ENCODE measurements at regions of chr12 and their contacts with region 1.

Region 1: DNA sequence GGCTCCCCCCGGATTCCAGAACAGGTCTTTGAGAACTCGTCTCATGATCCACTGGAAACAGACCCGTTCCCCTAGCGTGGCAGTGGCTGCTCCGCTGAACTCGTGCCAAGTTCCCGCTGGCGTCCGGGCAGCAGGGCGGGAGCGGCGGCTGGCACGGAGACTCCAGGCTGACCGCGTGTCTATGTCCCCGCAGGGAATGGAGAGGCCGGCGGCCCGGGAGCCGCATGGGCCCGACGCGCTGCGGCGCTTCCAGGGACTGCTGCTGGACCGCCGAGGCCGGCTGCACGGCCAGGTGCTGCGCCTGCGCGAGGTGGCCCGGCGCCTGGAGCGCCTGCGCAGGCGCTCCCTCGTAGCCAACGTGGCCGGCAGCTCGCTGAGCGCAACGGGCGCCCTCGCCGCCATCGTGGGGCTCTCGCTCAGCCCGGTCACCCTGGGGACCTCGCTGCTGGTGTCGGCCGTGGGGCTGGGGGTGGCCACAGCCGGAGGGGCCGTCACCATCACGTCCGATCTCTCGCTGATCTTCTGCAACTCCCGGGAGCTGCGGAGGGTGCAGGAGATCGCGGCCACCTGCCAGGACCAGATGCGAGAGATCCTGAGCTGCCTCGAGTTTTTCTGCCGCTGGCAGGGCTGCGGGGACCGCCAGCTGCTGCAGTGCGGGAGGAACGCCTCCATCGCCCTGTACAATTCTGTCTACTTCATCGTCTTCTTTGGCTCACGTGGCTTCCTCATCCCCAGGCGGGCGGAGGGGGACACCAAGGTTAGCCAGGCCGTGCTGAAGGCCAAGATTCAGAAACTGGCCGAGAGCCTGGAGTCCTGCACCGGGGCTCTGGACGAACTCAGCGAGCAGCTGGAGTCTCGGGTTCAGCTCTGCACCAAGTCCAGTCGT is 1.5 kb downstream of the APOLD1 start:
- DNase-seq: peak; percentile 88
- H3K4me3 ChIP-seq: peak overlapping the region; percentile 6 to 44 (median 39)
- H3K27ac ChIP-seq: peak overlapping the region; percentile 78
- H3K4me1 ChIP-seq: peaks cover 43% of the 10 kb centered on the region
- H3K27me3 ChIP-seq: no peaks in the 10 kb centered on the region
- CTCF ChIP-seq: peak in 1 of 2 donors; percentile 8
- POLR2A ChIP-seq: peak; percentile 91

Region 2: DNA sequence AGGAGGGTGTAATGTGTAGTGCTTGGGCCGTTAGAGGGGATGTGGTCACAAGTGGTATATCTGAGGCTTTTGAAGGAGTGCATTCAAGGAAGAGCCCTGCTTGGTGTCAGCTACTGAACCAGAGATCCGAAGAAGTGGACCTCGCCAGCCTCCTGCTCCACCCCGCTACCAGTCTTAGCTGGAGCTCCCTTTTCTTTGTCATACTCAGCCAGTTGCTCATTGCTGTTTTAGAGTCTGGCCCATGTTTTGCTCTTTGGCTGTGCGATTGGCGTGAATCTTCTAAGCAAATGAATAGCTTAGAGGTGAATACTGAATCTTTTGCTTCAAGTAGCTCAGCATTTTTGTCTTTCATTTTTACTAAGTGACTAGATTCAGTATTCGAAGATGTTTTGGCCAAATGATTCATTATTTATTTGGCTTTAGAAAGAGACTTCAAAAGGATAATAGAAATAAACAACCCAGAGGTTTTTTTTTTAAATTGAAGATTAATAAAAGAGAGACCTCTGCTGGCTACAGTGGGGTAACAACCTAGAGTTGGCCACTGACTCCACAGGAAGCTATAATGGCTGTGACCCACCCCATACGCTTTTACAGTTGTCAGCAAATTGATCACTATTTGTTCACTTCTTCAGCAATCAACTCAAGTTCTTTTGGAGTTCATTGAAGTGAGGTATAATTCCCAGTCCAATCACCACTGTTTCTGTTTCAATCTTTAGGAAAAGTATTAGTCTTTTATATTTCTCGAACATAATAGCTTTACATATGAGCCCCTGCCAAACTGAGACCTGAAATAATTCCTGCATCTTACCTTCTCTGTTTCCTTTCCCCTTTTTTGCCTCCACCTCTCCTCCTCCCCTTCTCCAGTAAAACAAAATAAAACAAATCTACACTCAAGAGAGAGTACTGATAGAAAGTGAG is 49.9 kb before region 1 on chr12:
- CTCF ChIA-PET with region 1: interaction called, 15 read pairs
- POLR2A ChIA-PET with region 1: interaction called, 4 read pairs
- dilution Hi-C with region 1: no loop called
- intact Hi-C with region 1: no loop called
- DNase-seq: peak; percentile 67
- H3K4me3 ChIP-seq: no peak overlapping the region
- H3K27ac ChIP-seq: peak overlapping the region; percentile 39
- H3K4me1 ChIP-seq: peaks cover 13% of the 10 kb centered on the region
- H3K27me3 ChIP-seq: no peaks in the 10 kb centered on the region
- CTCF ChIP-seq: peak; percentile 44 to 49
- POLR2A ChIP-seq: no peak

Region 3: GRCh38 chr12:12813120-12814101 is 26.5 kb after region 1 on chr12 and contains the start of gene DDX47:
- CTCF ChIA-PET with region 1: interaction called, 9 read pairs
- POLR2A ChIA-PET with region 1: interaction called, 3 read pairs
- dilution Hi-C with region 1: no loop called
- intact Hi-C with region 1: loop called (anchors 1 kb)
- DNase-seq: peak; percentile 92
- H3K4me3 ChIP-seq: peak within 1 kb of the TSS; percentile 83 to 97 (median 94)
- H3K27ac ChIP-seq: peak within 1 kb of the TSS; percentile 94
- H3K4me1 ChIP-seq: peaks cover 23% of the 10 kb centered on the region
- H3K27me3 ChIP-seq: no peaks in the 10 kb centered on the region
- CTCF ChIP-seq: peak; percentile 96 to 99
- POLR2A ChIP-seq: peak; percentile 77
- total RNA-seq, gene DDX47: 74.6 and 75.2 TPM in 2 replicates

Region 4: GRCh38 chr12:12872139-12872881 is 85.4 kb after region 1 on chr12:
- CTCF ChIA-PET with region 1: no interaction called
- POLR2A ChIA-PET with region 1: no interaction called
- dilution Hi-C with region 1: no loop called
- intact Hi-C with region 1: loop called (anchors 2 kb)
- DNase-seq: peak; percentile 93
- H3K4me3 ChIP-seq: peak overlapping the region in 1 of 3 experiments; percentile 43
- H3K27ac ChIP-seq: peak overlapping the region; percentile 96
- H3K4me1 ChIP-seq: peaks cover 41% of the 10 kb centered on the region
- H3K27me3 ChIP-seq: no peaks in the 10 kb centered on the region
- CTCF ChIP-seq: no peak
- POLR2A ChIP-seq: peak; percentile 74

Region 5: DNA sequence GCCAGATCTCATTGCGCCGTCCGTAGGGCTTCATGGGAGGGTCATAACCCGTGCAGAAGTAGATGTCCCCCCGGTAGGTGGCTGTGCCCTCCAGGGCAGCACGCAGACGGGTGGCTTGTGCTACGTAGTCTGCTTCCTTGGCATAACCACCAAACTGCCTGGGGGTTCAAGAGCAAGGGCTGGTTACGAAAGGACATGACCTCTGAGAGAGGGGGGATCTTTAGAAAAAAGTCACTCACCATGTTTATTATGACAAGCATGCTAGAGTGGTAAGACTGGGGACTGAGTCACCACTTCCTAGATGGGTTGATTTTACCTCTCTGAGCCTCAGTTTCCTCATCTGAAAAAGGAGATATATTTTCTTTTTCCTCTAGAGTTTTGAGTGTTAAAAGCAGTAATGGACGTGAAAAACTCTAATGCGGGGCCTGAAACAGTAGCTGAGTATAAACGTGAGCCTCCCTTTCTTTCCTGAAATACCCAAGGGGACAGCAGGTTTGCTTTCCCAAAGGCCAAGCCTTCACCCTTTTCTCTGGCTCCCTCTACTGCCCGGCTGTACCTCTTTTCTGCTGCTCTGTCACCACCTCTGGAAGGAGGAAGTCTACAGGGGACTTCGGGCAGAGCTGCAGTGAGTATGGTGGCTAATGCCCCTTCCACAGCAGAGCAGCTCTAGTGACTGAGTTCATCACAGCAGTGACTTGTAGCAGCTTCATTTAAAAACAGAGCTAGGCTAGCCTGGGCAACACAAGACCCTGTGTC is 188.5 kb after region 1 on chr12:
- CTCF ChIA-PET with region 1: interaction called, 21 read pairs
- POLR2A ChIA-PET with region 1: no interaction called
- dilution Hi-C with region 1: no loop called
- intact Hi-C with region 1: no loop called
- DNase-seq: peak; percentile 69
- H3K4me3 ChIP-seq: no peak overlapping the region
- H3K27ac ChIP-seq: peak overlapping the region; percentile 49
- H3K4me1 ChIP-seq: peaks cover 37% of the 10 kb centered on the region
- H3K27me3 ChIP-seq: no peaks in the 10 kb centered on the region
- CTCF ChIP-seq: peak; percentile 55 to 61
- POLR2A ChIP-seq: no peak

Region 6: GRCh38 chr12:13079440-13079906 is 292.5 kb after region 1 on chr12:
- CTCF ChIA-PET with region 1: interaction called, 3 read pairs
- POLR2A ChIA-PET with region 1: no interaction called
- dilution Hi-C with region 1: no loop called
- intact Hi-C with region 1: loop called (anchors 1 kb)
- DNase-seq: peak; percentile 98
- H3K4me3 ChIP-seq: no peak overlapping the region
- H3K27ac ChIP-seq: peak overlapping the region; percentile 69
- H3K4me1 ChIP-seq: peaks cover 12% of the 10 kb centered on the region
- H3K27me3 ChIP-seq: no peaks in the 10 kb centered on the region
- CTCF ChIP-seq: peak; percentile 64 to 76
- POLR2A ChIP-seq: no peak

Region 7: DNA sequence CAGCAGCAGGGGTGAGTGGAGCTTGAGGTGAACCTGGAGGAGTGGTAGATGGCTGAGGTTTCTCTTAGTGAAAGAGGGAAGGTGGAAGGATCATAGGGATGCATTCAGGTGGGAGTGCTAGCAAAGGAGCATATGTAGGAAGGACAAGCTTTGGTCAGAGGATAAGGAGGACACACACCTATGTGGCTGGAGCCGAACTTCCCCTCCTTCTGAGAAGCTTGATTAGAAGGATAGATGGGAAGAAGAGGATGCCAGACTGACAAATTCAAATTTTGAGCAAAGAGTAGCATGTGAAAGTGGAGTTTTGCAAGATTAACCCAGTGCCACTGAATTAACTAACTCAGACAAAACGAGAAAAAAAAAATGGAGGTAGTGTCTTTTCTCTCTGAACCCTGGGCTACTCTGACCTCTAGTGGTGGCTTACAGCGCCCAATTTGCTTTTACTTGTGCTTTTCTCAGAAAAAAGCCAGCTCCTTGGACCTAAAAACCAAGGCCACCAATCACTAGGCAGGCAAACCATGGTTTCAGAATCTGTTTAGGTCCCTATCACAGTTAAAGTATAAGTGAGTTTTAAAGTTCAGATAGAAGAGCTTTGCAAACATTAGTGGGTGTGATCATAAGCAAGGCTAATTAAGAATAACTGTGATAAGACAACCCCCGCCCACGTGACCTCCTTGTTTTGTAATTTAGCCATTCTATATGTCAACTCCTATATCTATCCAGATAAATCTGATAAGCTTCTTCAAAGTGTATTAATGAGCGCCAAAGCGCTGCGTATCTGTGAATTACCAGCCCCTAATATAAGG is 425.1 kb after region 1 on chr12:
- CTCF ChIA-PET with region 1: interaction called, 20 read pairs
- POLR2A ChIA-PET with region 1: no interaction called
- dilution Hi-C with region 1: no loop called
- intact Hi-C with region 1: loop called (anchors 2 kb)
- DNase-seq: peak; percentile 70
- H3K4me3 ChIP-seq: no peak overlapping the region
- H3K27ac ChIP-seq: peak overlapping the region; percentile 54
- H3K4me1 ChIP-seq: peaks cover 49% of the 10 kb centered on the region
- H3K27me3 ChIP-seq: no peaks in the 10 kb centered on the region
- CTCF ChIP-seq: peak; percentile 72 to 76
- POLR2A ChIP-seq: no peak